Activated naive CD4-positive, alpha-beta T cell treated with anti-CD3 and anti-CD28 coated beads for 36 hours (primary cell): ENCODE measurements at regions of chr16 and their contacts with region 1.

Region 1: DNA sequence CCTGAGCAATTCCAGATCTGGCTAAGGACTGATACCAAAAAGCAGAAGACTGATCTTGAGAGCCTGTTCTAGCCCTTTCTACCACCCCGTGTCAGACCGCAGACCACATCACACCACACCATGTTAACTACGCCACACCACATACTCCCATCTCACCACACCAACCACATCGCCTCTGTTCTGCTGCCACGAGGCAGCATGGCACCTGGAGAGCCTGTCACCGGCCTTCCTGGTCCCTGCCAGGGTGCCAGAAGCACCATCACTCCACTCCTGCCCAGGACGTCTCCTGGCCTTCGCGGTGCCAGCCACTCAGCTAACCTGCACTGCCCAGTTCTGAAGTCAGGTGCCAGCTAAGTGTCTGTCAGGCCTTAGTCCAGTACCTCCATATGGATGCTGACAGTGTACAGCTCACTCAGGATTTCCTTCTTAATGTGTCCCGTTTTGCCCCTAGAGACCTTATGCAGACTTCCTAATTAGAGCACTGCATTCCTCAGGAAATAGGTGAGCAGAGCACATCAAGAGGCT is 37.2 kb upstream of the BCAR1 start:
- DNase-seq: peak; percentile 82
- H3K4me3 Mint-ChIP-seq: no peak overlapping the region
- H3K27ac Mint-ChIP-seq: no peak overlapping the region
- H3K4me1 Mint-ChIP-seq: peaks cover 17% of the 10 kb centered on the region
- H3K27me3 Mint-ChIP-seq: peaks cover 3% of the 10 kb centered on the region

Region 2: DNA sequence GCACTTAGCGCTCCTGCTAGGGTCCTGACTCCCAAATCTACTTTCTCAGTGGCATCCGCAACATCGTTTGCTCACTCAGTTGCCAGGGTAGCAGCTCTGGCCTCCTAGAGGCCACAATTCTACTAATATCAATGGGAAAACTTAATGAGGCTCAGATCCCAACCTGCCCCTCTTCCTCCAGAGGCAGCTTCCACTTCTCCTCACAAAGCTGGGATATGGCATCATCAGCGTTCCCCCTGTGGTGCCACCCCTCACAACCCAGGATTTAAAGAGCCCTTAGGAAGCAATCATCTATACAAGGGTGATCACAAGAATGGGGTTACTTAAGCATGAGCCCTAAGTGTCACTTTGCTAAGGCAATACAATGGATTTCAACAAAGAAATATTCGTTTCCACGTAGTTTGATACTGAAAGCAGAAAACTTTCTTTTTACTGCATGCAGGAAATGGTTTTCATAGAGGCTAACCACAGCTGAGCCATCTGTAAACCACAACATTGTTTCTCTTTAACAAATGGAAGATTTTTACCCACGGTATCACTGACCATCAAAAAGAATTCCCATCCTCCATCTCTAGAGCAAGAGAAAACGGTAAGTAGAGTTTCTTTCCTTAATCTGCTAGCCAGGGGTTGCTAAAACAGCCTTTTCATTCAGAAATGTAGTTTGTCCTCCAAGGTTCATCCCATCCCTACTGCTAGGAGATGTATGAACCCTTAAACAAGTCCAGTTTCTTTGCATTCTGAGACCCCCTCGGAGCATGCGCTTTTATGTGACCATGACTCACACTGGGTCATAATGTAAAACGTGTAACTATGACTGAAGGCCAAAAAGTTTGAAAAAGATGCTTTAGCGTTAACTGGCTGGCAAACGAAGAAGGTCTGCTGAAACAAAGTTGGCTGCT is 31.1 kb after region 1 on chr16:
- CTCF ChIA-PET with region 1: no interaction called
- intact Hi-C with region 1: loop called (anchors 2 kb)
- DNase-seq: peak; percentile 40
- H3K4me3 Mint-ChIP-seq: no peak overlapping the region
- H3K27ac Mint-ChIP-seq: no peak overlapping the region
- H3K4me1 Mint-ChIP-seq: peaks cover 35% of the 10 kb centered on the region
- H3K27me3 Mint-ChIP-seq: no peaks in the 10 kb centered on the region